ENCODE measurements at regions of chr11 and their contacts with region 1.

Region 1: DNA sequence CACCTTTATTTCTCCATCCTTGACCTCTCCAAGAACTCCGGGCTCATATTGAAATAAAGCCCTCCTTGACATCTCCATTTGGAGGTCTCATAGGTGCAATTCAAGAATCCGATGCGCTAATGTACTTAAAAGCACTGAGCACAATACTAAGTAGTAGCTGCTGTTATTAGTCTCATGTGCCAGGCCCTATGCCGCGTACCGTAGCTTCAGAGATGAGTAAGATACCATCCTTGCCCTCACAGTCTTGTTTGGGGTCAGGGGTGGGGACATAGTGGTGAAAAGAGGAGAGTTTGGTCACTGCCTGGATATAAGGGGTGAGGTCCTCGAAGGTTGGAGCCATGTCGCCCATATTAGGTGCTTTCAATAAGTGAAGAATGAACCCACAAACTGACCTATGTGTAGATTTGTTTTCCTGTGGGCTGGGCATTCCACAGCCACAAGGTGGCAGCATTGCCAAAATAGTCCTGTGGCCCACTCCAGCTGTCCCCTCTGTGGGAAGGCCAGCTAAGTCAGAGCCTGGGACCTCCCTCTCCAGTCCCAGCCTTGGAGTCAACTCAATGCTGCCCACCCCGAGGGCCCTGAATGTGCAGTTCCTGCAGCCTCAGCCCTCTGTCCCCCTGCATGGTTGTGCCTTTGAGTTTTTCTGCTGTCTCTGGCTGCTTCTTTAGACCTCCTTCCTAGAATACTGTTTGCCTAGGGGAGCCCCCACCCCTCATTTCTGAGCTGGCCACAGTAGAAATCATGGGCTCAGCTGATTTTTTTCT is 6.5 kb downstream of the DCPS start:
- DNase-seq: peak; percentile 82
- ATAC-seq: peak; percentile 95

Region 2: DNA sequence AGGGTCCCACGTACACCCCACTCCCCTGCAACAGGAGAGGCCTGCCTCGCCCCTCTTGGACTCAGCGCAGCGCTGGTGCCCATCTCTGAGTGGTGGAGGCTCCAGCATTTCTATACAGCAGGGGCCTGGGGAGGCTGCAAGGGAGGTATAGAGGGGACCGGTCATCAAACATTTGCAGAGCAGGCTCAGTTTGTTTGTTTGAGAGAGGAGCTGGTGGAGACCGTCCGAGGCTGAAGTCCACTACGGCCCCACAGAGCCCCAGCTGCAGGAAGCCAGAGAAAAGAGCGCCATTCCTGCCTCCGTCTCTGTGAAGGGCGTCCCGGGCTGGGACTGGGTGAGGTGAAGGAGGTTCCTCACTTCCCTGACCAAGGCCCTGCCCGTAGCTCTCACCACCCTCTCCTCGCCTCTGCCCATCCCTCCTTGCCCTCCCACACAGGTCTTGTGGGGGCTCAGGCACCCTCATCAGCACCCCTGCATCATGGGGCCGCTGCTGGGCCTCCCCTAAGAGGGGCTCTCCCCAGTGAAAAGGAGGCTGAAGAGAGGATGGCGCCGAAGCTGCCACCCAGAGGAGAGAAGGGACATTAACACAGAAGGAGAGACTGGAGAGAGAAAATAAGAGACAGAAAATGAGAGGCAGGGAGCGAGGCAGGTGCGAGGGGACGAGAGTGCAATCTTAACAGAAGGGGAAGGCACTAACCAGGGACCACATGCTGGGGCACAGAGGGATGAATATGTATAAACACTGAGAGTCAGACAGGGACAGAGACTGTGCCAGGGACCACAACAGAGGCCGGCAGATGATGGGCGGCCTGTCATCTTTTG is 123.5 kb before region 1 on chr11:
- intact Hi-C with region 1: no loop called
- DNase-seq: no peak
- ATAC-seq: peak; percentile 24

Region 3: DNA sequence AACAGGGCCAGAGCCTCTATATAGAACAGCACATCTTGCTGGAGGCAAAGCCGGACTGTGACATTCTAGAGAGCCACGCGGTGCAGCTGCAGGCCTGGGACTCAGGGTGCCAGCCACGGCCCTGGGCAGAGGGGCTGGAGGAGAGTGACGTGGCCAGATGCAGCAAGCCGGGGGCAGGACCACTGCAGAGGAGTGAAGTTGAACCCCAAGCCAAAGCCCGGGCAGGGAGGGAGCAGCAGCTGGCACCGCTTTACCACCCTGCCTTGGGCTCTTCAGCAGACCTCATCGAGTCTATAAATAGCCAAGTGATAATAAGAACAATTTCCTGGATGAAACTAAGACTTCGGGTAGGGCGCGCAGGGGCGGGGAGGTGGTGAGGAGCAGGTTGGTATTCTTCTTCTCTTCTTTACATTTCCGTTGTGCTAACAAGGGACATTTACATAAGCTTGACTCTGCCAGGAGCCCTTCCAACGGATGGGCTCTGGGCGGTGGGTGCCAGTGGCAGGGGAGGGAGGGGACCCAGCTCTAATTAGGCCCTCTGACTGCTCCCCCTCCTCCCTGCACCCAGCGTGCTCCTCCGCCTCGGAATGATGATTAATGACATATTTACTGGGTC is 155.3 kb after region 1 on chr11:
- intact Hi-C with region 1: no loop called
- DNase-seq: no peak
- ATAC-seq: peak; percentile 38

Region 4: DNA sequence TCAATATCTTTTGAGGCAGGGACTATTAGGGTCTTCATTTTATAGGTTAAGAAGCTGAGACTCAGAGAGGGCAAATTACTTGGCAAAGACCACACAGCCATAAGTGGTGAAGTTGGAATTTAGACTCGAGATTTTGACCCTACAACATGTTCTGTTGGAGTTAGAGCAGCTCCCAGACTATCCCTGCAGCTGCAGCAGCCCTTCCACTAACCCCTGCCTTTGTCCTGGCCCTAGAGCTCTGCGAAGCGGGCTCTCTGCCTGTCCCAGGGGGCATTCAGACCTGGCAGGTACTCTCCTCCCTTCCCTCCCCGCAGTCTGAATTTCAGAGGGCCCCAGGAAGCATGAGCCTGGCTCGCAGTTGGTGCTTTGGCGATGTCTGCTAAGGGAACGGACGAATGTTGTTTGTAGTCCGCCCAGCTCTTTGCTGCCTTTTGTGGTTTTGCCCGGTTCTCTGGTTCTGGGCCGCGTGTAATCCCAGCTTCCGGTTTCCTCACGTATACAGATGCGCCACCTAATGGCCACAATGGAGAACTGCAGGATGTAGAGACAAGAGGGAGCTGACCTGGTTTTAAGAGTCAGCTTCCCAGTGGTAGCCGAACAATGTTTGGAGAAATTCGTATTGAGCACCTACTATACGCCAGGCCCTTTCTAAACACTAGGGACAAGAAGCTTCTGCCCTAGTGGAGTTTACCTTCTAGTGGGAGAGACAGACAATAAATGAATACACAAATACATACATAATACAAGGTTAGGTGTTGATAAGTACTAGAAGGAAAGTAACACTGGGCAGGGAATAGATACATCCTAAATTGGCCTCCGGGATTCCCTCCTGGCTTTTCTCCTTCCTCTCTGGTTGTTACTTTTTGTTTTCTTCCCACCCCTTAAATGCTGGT is 170.2 kb after region 1 on chr11:
- intact Hi-C with region 1: loop called (anchors 1 kb)
- DNase-seq: peak; percentile 89
- ATAC-seq: peak; percentile 89